ENCODE measurements at regions of chr9 and their contacts with region 1.

Region 1: GRCh38 chr9:20929276-20929675 is 102.2 kb downstream of the HACD4 start:
- DNase-seq: no peak
- ATAC-seq: no peak
- H3K4me3 ChIP-seq: no peak overlapping the region
- H3K27ac ChIP-seq: no peak overlapping the region
- H3K4me1 ChIP-seq: no peaks in the 10 kb centered on the region
- H3K27me3 ChIP-seq: no peaks in the 10 kb centered on the region
- CTCF ChIP-seq: no peak
- POLR2A ChIP-seq: no peak
- RAD21 ChIP-seq: no peak

Region 2: DNA sequence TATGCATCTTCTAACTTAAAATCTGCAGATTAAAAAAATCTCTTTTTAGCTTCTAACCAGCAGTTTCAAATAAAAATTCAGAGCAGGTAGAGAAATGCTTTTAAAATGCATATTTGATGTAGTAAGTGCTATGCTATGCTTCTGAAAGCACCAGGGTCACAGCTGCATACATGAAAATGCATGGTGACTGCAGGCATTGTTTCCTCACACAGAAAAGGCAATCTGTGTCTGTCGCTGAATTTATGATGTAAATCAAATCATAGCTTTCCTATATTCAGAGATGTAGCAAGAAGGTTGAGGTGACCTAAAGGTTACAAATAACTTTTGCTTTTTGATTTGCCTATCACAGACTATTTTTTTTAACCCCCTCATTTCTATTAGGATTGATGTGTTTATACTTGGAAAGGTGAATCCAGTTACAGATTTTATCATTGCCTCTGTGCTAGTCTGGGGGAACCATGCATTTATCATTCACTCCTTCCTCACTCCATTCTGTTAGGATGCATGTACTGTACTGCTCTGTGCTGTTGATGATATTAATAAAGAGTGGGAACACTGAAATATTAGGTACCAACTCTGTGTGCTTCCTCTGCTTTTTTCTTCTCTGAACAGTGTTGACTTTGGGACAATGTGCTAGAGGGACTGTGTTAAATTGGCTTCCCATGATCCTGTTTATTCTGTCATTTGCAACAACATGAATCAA is 179.6 kb before region 1 on chr9:
- CTCF ChIA-PET with region 1: no interaction called
- POLR2A ChIA-PET with region 1: no interaction called
- dilution Hi-C with region 1: no loop called
- in situ Hi-C with region 1: no loop called
- intact Hi-C with region 1: loop called (anchors 5 kb)
- DNase-seq: no peak
- ATAC-seq: no peak
- H3K4me3 ChIP-seq: no peak overlapping the region
- H3K27ac ChIP-seq: no peak overlapping the region
- H3K4me1 ChIP-seq: no peaks in the 10 kb centered on the region
- H3K27me3 ChIP-seq: no peaks in the 10 kb centered on the region
- CTCF ChIP-seq: no peak
- POLR2A ChIP-seq: no peak
- RAD21 ChIP-seq: no peak

Measured in IMR-90 (cell line).